Uterus (tissue), 4 donors: ENCODE measurements at regions of chr19 and their contacts with region 1.

Region 1: DNA sequence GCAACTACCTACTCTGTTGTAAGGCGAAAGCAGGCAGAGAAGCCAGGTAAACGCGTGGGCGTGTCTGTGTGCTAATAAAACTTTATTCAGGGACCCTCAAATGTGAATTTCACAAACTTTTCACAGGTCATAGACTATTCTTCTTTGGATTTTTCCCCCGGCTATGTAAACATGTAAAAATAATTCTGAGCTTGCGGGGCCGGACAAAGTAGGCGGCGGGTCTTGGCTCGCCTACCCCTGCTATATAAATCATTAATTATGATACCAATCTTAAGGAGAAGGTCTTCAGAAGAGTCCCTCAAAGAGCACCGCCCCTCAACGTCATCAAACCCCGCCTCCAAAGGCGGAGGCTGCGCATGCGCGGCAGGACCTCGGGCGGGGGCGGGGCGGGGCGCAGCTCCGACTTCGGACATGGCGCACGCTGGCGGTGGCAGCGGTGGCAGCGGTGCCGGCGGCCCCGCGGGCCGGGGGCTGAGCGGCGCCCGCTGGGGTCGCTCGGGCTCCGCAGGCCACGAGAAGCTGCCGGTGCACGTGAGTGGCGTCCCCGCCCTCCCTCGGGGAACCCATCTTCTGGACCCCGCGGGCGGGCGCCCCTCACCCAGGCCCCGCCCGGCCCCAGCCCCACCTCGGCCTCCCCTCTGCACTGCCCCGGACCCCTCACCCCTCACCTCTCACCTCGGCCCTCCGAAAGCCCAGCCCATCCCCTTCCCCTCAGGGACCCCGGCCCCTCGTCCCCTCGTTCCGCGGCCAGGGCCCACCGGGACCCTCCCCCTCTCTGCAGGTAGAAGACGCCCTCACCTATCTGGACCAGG is at the start of gene SIN3B:
- DNase-seq: peak; percentile 85 to 92
- H3K4me3 ChIP-seq: peak within 1 kb of the TSS; percentile 92
- H3K27ac ChIP-seq: peak within 1 kb of the TSS; percentile 92 to 94
- H3K4me1 ChIP-seq: peaks cover 4 to 5% of the 10 kb centered on the region in 2 donors
- H3K27me3 ChIP-seq: no peaks in the 10 kb centered on the region
- CTCF ChIP-seq: peak in 1 of 4 experiments; percentile 9
- POLR2A ChIP-seq: peak; percentile 71 to 82
- total RNA-seq, gene SIN3B: 21.2 to 149 (median 92.3) TPM

Region 2: DNA sequence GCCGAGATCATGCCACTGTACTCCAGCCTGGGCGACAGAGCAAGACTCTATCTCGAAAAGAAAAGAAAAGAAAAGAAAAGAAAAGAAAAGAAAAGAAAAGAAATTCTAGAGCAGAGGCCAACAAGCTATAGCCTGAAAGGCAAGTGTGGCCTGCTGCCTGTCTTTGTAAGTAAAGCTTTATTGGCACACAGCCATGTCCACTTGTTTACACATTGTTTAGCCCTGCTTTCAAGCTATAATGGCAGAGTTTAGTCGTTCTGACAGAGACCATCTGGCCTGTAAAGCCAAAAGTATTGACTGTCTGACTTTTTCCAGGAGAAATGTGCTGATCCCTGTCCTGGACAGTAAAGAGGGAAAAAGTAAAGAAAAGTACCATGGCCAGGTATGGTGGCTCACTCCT is 91.3 kb before region 1 on chr19:
- intact Hi-C with region 1: no loop called
- DNase-seq: no peak
- H3K4me3 ChIP-seq: no peak overlapping the region
- H3K27ac ChIP-seq: no peak overlapping the region
- H3K4me1 ChIP-seq: no peaks in the 10 kb centered on the region
- H3K27me3 ChIP-seq: no peaks in the 10 kb centered on the region
- CTCF ChIP-seq: no peak
- POLR2A ChIP-seq: no peak

Region 3: GRCh38 chr19:16893675-16893989 is 64.4 kb after region 1 on chr19:
- intact Hi-C with region 1: loop called (anchors 5 kb)
- DNase-seq: no peak
- H3K4me3 ChIP-seq: no peak overlapping the region
- H3K27ac ChIP-seq: peak overlapping the region; percentile 56 to 61
- H3K4me1 ChIP-seq: peaks cover 0 to 7% of the 10 kb centered on the region in 2 donors
- H3K27me3 ChIP-seq: no peaks in the 10 kb centered on the region
- CTCF ChIP-seq: no peak
- POLR2A ChIP-seq: no peak